ENCODE measurements at regions of chr19 and their contacts with region 1.

Region 1: DNA sequence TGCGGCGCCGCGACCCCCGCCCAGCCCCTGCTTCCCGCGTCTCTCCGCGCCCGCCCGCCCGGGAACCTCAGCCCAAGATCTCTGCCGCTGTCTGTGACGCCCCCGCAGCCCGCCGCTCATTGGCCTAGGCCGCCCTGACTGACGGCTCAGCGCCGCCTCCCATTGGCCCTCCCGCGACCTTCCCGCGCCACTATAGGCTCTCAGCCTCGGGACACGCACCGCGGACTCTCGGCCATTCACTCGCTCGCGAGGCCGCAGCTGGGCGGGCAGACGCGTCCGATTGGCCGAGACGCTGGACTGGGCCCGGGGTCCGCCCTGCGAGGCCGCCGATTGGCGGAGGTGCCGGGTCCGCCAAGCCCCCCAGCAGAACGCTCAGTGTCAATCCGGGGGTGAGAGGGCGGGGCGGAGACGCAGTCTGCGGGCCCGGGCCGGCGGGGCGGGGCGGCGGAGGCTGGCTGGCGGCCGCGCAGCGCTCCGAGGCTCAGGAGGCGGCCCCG is at the start of gene PRKACA:
- DNase-seq: peak; percentile 99
- ATAC-seq: peak; percentile 59 to 73
- H3K4me3 ChIP-seq: peak within 1 kb of the TSS; percentile 83 to 99 (median 95)
- H3K27ac ChIP-seq: peak within 1 kb of the TSS; percentile 99 to 100 (median 99)
- H3K4me1 ChIP-seq: peaks cover 60% of the 10 kb centered on the region in 2 donors
- H3K27me3 ChIP-seq: no peaks in the 10 kb centered on the region
- CTCF ChIP-seq: no peak
- POLR2A ChIP-seq: peak; percentile 76 to 87
- total RNA-seq, gene PRKACA: 74.7 to 180 (median 147) TPM

Region 2: DNA sequence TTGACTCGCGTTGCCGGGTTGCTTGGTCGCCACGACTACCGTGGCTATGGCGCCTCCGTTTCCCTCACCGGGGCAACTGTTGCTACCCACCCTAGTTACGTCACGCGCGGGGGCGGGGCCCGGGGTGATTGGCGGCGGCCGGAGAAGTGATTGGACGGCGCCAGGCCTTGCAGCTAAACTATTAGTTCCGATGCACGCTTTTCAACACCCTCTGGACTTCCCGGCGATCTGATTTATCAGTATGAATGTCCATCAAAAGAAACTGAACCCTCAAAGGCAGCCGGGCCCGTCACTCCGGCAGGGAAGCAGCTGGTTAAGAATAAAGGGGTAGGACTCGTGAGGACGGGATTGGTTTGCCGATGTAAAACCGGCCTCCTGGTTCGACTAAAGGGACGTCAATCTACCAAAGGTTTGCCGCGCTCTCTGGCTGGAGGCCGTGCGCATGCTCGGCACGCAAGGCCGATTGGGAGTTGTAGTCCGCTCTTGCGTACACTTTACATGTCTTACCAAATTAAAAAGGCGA is 111.4 kb before region 1 on chr19 and contains the start of gene RFX1:
- in situ Hi-C with region 1: no loop called
- intact Hi-C with region 1: loop called (anchors 5 kb)
- DNase-seq: peak; percentile 99 to 100
- ATAC-seq: peak; percentile 82 to 85
- H3K4me3 ChIP-seq: peak within 1 kb of the TSS; percentile 84 to 97 (median 92)
- H3K27ac ChIP-seq: peak within 1 kb of the TSS; percentile 96 to 100 (median 99)
- H3K4me1 ChIP-seq: peaks cover 34 to 45% of the 10 kb centered on the region in 2 donors
- H3K27me3 ChIP-seq: no peaks in the 10 kb centered on the region
- CTCF ChIP-seq: peak in 1 of 5 experiments; percentile 41
- POLR2A ChIP-seq: no peak
- total RNA-seq, gene RFX1: 2.7 to 7.2 (median 4.4) TPM

Region 3: DNA sequence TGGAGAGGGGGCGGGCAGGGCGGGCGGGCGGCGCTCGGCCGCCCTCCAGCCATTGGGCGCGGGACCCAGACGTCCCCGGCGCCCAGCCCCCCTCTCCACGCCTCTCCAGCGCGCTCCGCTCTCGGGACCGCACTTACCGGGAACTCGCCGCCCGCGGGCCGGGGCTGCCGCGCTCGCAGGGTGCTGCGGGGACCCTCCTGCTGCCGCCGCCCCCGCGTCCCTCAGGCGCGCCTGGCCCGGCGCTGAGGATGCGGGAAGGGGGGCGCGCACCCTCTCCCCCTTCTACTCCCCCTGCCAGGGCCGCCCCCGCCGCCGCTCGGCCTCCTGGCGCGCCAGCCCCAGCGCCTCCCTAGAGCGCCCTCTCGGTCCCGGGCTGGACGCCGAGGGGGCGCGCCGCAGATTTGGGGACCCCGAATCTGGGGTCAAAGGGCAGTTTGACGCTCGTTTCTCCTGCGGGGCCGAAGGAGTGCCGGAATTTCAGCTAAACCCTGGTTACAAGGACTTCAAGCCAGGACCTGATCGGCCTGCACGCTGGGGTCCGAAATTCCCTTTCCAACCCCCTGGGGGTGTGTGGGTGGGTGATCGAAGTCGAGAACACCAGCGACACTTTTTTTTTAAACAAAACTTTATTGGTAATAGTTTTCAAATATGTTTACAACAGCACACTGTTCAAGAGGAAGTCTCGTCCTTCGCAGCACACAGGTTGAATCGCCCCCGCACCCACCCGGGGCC is 26.5 kb before region 1 on chr19:
- in situ Hi-C with region 1: no loop called
- intact Hi-C with region 1: loop called (anchors 2 kb)
- DNase-seq: peak in 1 of 2 donors; percentile 36
- ATAC-seq: peak; percentile 69 to 70
- H3K4me3 ChIP-seq: peak overlapping the region; percentile 63 to 89 (median 74)
- H3K27ac ChIP-seq: peak overlapping the region; percentile 89 to 96 (median 92)
- H3K4me1 ChIP-seq: peaks cover 0 to 5% of the 10 kb centered on the region in 2 donors
- H3K27me3 ChIP-seq: no peaks in the 10 kb centered on the region
- CTCF ChIP-seq: peak in 3 of 5 experiments; percentile 22 to 36 (median 36)
- POLR2A ChIP-seq: peak; percentile 90 to 94

Region 4: DNA sequence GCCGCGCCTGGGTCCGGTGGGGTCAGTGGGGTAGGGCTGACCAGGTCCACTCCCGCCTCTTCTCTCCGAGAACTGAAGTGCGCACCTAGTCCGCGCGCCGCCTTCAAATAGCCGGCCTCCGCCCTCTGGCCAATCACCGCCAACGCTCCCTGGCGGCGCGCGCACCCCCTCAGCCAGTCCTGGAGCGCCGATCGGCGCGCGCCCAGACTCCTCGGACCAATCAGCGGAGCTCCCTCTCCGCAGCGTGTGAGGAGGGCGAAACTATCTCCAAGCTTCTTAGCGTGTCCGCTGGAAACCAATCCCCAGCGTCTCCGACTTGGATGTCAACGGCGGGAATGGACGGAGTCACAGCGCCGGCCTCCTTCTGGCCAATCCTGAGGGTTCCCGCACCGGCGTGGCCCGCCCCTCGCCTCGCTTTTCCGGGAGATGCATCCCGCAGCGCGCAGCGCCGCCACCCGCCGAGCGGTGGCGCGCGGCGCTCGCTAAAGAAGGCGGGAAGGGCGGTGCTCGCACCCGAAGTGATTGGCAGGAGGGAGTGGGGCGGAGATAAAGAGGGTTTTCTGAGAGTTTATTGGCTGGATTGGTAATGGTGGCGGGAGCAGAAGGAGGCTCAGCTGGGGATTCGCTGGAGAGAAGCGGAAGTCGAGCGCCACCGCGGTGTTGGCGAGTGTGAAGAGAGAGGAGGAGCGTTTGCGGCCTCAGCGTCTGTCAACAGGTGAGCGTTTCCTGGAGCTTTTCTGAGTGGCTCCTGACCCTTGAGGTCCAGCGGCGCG is 19.0 kb after region 1 on chr19 and contains the start of gene ASF1B:
- in situ Hi-C with region 1: no loop called
- intact Hi-C with region 1: loop called (anchors 1 kb)
- DNase-seq: peak; percentile 99 to 100
- ATAC-seq: peak; percentile 86 to 94
- H3K4me3 ChIP-seq: peak within 1 kb of the TSS; percentile 65 to 81 (median 76)
- H3K27ac ChIP-seq: peak within 1 kb of the TSS; percentile 91 to 99 (median 98)
- H3K4me1 ChIP-seq: peaks cover 24 to 32% of the 10 kb centered on the region in 2 donors
- H3K27me3 ChIP-seq: no peaks in the 10 kb centered on the region
- CTCF ChIP-seq: peak; percentile 86 to 92 (median 87)
- POLR2A ChIP-seq: peak; percentile 81 to 87
- total RNA-seq, gene ASF1B: 1.2 to 4.1 (median 1.5) TPM in 3 of 4 donors, not detected in the other

Measured in gastrocnemius medialis (tissue), 4 donors.